ENCODE measurements at regions of chr1 and their contacts with region 1.

Region 1: DNA sequence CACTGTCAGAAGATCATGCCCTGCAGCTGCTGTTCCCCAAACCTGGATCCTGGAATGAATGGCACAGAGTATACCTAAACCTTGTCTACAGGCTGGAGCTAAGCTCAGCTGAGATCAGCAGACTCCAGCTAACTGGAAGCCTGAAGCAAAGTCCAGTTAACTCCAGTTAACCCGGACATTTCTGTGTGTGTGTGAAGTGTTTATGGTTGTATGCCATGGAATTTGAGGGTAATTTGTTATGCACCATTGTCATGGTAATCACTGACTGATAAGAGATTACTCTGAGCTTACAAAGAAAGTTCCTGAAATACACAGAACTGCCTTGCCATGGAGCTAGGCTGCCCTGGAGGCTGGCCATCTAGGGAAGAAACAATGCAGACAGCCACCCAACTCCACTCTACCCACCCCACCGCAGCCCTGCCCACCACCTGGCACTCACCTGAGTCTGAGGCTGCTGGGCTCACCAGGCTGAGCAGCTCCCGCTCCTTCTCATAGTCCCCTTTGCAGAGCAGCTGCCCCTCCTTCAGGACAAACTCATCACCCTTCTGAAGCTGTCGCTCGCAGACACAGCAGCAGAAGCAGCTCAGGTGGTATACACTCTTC is 107.4 kb downstream of the LMX1A start:
- DNase-seq: no peak
- H3K4me3 ChIP-seq: no peak overlapping the region
- H3K27ac ChIP-seq: no peak overlapping the region
- H3K4me1 ChIP-seq: no peaks in the 10 kb centered on the region
- H3K27me3 ChIP-seq: peaks cover 4% of the 10 kb centered on the region
- CTCF ChIP-seq: no peak
- EP300 ChIP-seq: no peak
- POLR2A ChIP-seq: no peak

Region 2: DNA sequence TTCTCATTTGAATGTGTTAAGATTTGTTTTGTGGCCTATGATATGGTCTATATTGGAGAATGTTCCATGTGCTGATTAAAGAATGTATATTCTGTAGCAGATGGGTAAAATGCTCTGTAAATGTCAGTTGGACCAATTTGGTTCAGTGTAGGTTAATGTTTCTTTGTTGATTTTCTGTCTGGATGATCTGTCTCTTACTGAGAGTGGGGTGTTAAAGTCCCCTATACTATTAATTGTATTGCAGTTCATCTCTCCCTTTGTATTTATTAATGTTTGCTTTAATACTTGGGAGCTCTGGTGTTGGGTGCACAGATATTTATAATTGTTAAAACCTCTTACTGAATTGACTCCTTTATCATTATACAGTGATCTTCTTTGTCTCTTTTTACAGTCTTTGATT is 1342.8 kb before region 1 on chr1:
- in situ Hi-C with region 1: no loop called
- intact Hi-C with region 1: loop called (anchors 5 kb)
- DNase-seq: no peak
- H3K4me3 ChIP-seq: no peak overlapping the region
- H3K27ac ChIP-seq: no peak overlapping the region
- H3K4me1 ChIP-seq: no peaks in the 10 kb centered on the region
- H3K27me3 ChIP-seq: no peaks in the 10 kb centered on the region
- CTCF ChIP-seq: no peak
- EP300 ChIP-seq: no peak
- POLR2A ChIP-seq: no peak

Region 3: DNA sequence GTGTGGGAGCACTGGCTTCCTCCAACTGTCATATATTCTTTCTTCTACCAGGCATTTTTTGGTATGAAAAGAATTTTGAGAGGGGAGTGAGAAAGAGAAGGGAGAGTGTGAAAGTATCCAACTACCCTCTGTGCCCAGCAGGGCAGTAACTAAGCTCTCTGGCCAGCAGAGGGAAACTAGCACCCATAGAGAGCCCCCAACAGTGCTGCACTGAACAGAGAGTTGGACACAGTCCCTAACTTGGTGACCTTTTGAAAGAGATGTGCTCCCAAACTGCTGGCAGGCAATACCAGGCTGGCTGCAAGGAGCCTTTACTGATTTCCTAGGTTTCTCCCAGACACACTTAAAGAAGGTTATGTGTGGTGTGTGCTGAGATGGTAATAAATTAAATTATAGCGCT is 808.8 kb before region 1 on chr1:
- in situ Hi-C with region 1: no loop called
- intact Hi-C with region 1: no loop called
- DNase-seq: no peak
- H3K4me3 ChIP-seq: no peak overlapping the region
- H3K27ac ChIP-seq: no peak overlapping the region
- H3K4me1 ChIP-seq: no peaks in the 10 kb centered on the region
- H3K27me3 ChIP-seq: no peaks in the 10 kb centered on the region
- CTCF ChIP-seq: peak in 4 of 5 experiments; percentile 15 to 29 (median 24)
- EP300 ChIP-seq: no peak
- POLR2A ChIP-seq: no peak

Region 4: GRCh38 chr1:164863056-164863455 is 386.0 kb before region 1 on chr1:
- in situ Hi-C with region 1: no loop called
- intact Hi-C with region 1: loop called (anchors 5 kb)
- DNase-seq: no peak
- H3K4me3 ChIP-seq: no peak overlapping the region
- H3K27ac ChIP-seq: no peak overlapping the region
- H3K4me1 ChIP-seq: no peaks in the 10 kb centered on the region
- H3K27me3 ChIP-seq: no peaks in the 10 kb centered on the region
- CTCF ChIP-seq: no peak
- EP300 ChIP-seq: no peak
- POLR2A ChIP-seq: no peak

Measured in transverse colon (tissue), 4 donors.